Activated CD4-positive, alpha-beta T cell treated with anti-CD3 and anti-CD28 coated beads, Interleukin-2, amount 10 ng/mL, durations not matched to agents 24 days and 14 days (primary cell): ENCODE measurements at regions of chr9 and their contacts with region 1.

Region 1: GRCh38 chr9:70258692-70259511 is at the start of gene SMC5:
- DNase-seq: peak; percentile 98
- H3K4me3 Mint-ChIP-seq: peak within 1 kb of the TSS; percentile 91
- H3K27ac Mint-ChIP-seq: peak within 1 kb of the TSS; percentile 85
- H3K4me1 Mint-ChIP-seq: peaks cover 49% of the 10 kb centered on the region
- H3K27me3 Mint-ChIP-seq: peaks cover 11% of the 10 kb centered on the region
- total RNA-seq, gene SMC5: 47.0 and 50.7 TPM in 2 replicates

Region 2: DNA sequence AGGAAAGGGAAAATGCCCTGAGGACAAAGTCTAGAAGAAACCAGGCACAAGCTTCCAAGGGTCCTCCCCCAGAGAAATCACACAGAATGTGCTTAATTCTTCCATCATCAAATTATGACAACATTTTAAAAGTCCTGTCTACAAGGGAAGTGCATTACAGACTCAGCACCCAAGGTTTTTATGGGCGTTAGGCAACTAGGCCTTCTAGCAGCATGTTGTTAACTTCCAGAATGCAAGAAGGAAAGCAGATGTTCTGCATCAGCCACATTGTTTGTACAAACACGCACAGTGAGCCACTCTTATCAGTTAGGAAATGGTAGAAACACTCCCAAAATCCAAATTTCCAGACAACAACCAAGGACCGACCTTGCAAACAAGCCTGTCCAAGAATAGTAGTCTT is 26.3 kb after region 1 on chr9:
- intact Hi-C with region 1: loop called (anchors 2 kb)
- DNase-seq: no peak
- H3K4me3 Mint-ChIP-seq: no peak overlapping the region
- H3K27ac Mint-ChIP-seq: no peak overlapping the region
- H3K4me1 Mint-ChIP-seq: peaks cover 4% of the 10 kb centered on the region
- H3K27me3 Mint-ChIP-seq: no peaks in the 10 kb centered on the region

Region 3: DNA sequence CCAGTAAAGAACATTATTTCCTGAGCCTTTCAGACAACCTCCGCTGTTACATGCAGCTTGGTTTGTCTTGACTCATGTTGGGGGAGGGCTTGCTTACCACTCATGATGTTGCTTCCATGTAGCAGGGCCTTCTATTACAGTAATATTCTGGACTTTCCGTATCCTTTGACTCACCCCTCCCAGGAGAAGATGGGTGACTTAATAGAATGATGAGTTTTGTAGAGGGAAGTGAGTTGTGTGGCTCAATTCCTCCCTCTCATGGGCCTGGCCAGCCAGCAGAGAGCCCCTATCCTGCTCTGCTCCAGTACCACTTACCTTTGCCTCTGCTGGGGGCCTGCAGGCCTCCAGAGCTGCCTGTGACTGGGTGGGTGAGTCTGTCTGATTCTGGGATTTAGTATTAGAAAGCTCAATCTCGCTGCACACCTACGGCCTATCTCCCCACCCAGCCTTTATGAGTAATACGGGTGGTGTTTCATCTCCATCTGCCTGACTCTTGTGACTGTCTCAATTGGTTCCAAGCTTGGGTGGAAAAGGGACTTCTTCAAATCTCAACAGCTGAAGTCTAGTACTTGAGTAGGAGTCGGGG is 208.2 kb after region 1 on chr9:
- intact Hi-C with region 1: loop called (anchors 5 kb)
- DNase-seq: no peak
- H3K4me3 Mint-ChIP-seq: peak overlapping the region; percentile 14
- H3K27ac Mint-ChIP-seq: peak overlapping the region; percentile 77
- H3K4me1 Mint-ChIP-seq: peaks cover 39% of the 10 kb centered on the region
- H3K27me3 Mint-ChIP-seq: no peaks in the 10 kb centered on the region